Vagina (tissue), 2 donors: ENCODE measurements at regions of chr4 and their contacts with region 1.

Region 1: DNA sequence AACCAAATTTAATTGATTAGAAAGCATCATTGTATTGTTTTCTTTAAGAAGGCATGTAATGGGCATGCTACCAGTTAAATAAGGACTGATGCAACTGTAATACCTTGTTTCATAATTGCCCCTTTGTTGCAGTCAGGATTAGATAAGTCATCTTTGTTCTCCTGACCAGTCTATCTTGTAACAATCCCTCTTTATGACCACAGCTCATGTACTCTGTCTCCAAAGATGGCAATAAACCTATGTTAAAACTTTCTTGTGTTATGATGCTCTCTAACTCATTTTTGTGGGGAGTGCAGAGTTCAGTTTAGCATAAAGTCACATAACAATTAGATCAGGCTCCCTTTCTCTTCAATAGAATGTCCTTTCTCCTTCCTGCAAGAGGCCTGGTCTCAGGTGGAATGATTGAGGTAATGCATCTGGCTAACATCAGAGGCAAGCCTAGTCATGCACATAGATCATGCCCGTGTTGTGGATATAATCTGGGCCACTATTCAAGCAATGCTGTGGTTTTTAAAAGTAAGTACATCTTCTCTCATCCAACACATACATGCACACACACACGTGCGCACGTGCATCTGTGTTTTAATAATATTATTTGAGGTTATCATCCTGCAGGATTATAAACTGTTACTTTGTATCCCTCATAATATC is 45.6 kb downstream of the TMEM154 start:
- DNase-seq: no peak
- H3K4me3 ChIP-seq: no peak overlapping the region
- H3K27ac ChIP-seq: no peak overlapping the region
- H3K4me1 ChIP-seq: no peaks in the 10 kb centered on the region
- H3K27me3 ChIP-seq: no peaks in the 10 kb centered on the region
- CTCF ChIP-seq: no peak
- POLR2A ChIP-seq: no peak

Region 2: GRCh38 chr4:152500800-152501434 is 133.3 kb before region 1 on chr4:
- intact Hi-C with region 1: loop called (anchors 10 kb)
- DNase-seq: no peak
- H3K4me3 ChIP-seq: no peak overlapping the region
- H3K27ac ChIP-seq: no peak overlapping the region
- H3K4me1 ChIP-seq: no peaks in the 10 kb centered on the region
- H3K27me3 ChIP-seq: no peaks in the 10 kb centered on the region
- CTCF ChIP-seq: peak; percentile 37 to 81 (median 61)
- POLR2A ChIP-seq: no peak

Region 3: GRCh38 chr4:152735396-152735859 is 101.2 kb after region 1 on chr4:
- intact Hi-C with region 1: loop called (anchors 2 kb)
- DNase-seq: no peak
- H3K4me3 ChIP-seq: no peak overlapping the region
- H3K27ac ChIP-seq: no peak overlapping the region
- H3K4me1 ChIP-seq: no peaks in the 10 kb centered on the region
- H3K27me3 ChIP-seq: no peaks in the 10 kb centered on the region
- CTCF ChIP-seq: peak in 1 of 3 experiments; percentile 17
- POLR2A ChIP-seq: no peak

Region 4: DNA sequence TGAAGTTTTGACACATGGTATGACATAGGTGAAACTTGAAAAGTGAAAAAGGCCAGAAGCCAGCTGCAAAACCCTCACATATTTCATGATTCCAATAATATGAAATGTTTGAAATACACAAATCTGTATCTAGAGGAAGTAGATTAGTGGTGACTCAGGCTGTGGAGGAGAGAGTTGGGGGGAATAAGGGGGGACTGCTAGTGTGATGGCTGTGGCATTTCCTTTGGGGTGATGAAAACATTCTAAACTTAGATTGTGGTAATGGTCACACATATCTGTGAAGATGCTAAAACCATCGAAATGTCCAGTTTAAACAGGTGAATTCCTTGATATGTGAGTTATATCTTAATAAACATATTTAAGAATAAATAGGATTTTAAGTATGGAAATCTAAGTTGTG is 1498.2 kb after region 1 on chr4:
- intact Hi-C with region 1: no loop called
- DNase-seq: no peak
- H3K4me3 ChIP-seq: no peak overlapping the region
- H3K27ac ChIP-seq: no peak overlapping the region
- H3K4me1 ChIP-seq: no peaks in the 10 kb centered on the region
- H3K27me3 ChIP-seq: no peaks in the 10 kb centered on the region
- CTCF ChIP-seq: no peak
- POLR2A ChIP-seq: no peak